Caco-2 (cell line): ENCODE measurements at regions of chr13 and their contacts with region 1.

Region 1: DNA sequence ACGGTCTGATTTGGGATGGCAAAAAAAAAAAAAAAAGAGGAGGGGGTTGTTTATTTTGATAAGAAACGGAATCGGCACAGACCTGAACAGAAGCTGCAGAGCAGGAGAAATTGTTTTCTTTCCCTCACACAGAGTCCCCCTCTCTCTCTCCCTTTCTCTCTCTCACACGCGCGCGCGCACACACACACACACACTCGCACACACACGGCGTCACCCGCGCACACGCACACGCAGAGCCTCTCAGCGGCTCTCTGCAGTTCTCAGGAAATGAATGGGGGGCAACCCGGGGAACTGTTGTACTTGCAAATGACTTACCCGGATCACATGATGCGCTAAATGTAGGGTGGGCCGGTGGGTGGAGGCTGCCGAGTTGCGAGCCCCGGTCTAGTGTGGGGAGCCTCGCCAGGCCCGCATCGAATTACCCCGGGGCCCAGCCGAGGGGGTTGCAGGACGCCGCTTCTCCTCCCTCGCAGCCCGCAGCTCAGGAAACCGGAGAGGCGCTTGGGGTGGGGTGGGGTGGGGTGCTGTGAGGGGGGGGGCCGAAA is 475 bp downstream of the KLF12 start:
- DNase-seq: peak; percentile 71 to 74
- H3K4me3 ChIP-seq: peak overlapping the region; percentile 94
- H3K4me3 Mint-ChIP-seq: no peak overlapping the region
- H3K27ac Mint-ChIP-seq: peak overlapping the region; percentile 67
- H3K4me1 ChIP-seq: peaks cover under 1% of the 10 kb centered on the region
- H3K4me1 Mint-ChIP-seq: peaks cover 8% of the 10 kb centered on the region
- H3K27me3 ChIP-seq: no peaks in the 10 kb centered on the region
- H3K27me3 Mint-ChIP-seq: no peaks in the 10 kb centered on the region
- CTCF ChIP-seq: no peak

Region 2: DNA sequence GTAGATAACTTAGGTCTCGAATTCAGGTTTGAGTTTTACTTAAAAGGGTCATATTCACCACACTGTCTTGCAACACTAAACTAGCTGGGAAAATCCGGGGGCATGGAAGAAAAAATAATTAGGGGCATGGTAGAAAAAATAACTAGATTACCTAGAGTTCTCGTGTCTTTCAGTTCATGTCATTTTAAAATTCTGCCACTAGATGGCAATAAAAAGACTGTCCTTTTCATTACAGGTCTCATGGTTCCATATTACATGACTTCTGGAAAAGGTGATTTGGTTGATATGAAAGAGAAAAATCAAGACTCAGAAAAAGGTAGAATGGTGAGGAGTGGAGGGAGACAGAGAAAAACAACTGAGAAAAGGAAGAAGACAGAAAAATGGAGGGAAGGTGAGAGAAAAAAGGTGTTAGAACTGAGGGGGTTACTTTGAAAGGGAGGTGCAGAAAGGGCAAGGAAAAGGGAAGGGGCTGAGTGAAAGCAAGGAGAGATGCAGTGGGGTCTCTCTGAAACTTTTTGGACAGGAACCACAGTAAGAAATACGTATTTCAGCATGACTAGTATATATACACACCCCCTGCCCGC is 298.5 kb before region 1 on chr13:
- CTCF ChIA-PET with region 1: no interaction called
- POLR2A ChIA-PET with region 1: no interaction called
- intact Hi-C with region 1: loop called (anchors 1 kb)
- DNase-seq: peak in 1 of 2 experiments; percentile 37
- H3K4me3 ChIP-seq: no peak overlapping the region
- H3K4me3 Mint-ChIP-seq: no peak overlapping the region
- H3K27ac Mint-ChIP-seq: no peak overlapping the region
- H3K4me1 ChIP-seq: peaks cover 10% of the 10 kb centered on the region; the same call in 1 of the 2 replicates
- H3K4me1 Mint-ChIP-seq: peaks cover 7% of the 10 kb centered on the region
- H3K27me3 ChIP-seq: no peaks in the 10 kb centered on the region
- H3K27me3 Mint-ChIP-seq: no peaks in the 10 kb centered on the region
- CTCF ChIP-seq: peak in 1 of 2 experiments; percentile 42

Region 3: GRCh38 chr13:73943137-73943964 is 190.4 kb before region 1 on chr13:
- CTCF ChIA-PET with region 1: no interaction called
- POLR2A ChIA-PET with region 1: no interaction called
- intact Hi-C with region 1: loop called (anchors 10 kb)
- DNase-seq: no peak
- H3K4me3 ChIP-seq: no peak overlapping the region
- H3K4me3 Mint-ChIP-seq: no peak overlapping the region
- H3K27ac Mint-ChIP-seq: no peak overlapping the region
- H3K4me1 ChIP-seq: no peaks in the 10 kb centered on the region; the same call in 1 of the 2 replicates
- H3K4me1 Mint-ChIP-seq: peaks cover 9% of the 10 kb centered on the region
- H3K27me3 ChIP-seq: no peaks in the 10 kb centered on the region
- H3K27me3 Mint-ChIP-seq: no peaks in the 10 kb centered on the region
- CTCF ChIP-seq: no peak

Region 4: GRCh38 chr13:74026753-74027152 is 107.0 kb before region 1 on chr13:
- CTCF ChIA-PET with region 1: interaction called, 4 read pairs
- POLR2A ChIA-PET with region 1: interaction called, 3 read pairs
- intact Hi-C with region 1: loop called (anchors 1 kb)
- DNase-seq: no peak
- H3K4me3 ChIP-seq: no peak overlapping the region
- H3K4me3 Mint-ChIP-seq: no peak overlapping the region
- H3K27ac Mint-ChIP-seq: peak overlapping the region; percentile 75
- H3K4me1 ChIP-seq: peaks cover 80% of the 10 kb centered on the region
- H3K4me1 Mint-ChIP-seq: peaks cover 72% of the 10 kb centered on the region
- H3K27me3 ChIP-seq: no peaks in the 10 kb centered on the region
- H3K27me3 Mint-ChIP-seq: no peaks in the 10 kb centered on the region
- CTCF ChIP-seq: no peak

Region 5: DNA sequence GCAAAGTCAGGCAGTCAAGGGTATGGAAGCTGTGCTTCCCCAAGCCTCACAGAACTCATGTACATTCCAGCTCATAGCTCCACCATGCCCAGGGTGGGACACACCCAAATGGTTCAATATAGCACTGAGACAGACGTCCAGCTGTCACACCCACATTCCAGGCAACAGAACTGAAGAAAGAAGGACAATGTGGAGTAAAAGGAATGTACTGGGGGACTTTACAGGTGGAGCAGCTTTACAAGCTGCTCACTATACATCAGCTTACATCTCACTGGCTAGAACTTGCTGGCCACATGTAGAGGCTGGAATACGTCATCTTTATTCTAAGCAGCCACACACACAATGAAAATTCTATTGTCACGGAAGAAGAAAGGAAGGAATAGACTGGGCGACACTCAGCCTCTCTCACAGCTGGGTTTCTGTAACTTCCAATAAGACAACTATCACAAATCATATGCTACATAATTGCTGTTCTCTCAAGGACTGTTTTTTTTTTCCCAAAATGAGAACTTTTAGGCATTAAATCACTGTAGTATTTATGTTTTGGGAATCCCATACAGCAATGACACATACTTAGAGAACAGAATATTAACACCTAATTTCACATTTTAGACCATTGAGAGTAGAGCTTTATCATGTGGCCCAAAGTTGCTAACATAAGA is 85.7 kb before region 1 on chr13:
- CTCF ChIA-PET with region 1: no interaction called
- POLR2A ChIA-PET with region 1: interaction called, 4 read pairs
- intact Hi-C with region 1: loop called (anchors 2 kb)
- DNase-seq: peak; percentile 74 to 83
- H3K4me3 ChIP-seq: no peak overlapping the region
- H3K4me3 Mint-ChIP-seq: peak overlapping the region; percentile 54
- H3K27ac Mint-ChIP-seq: peak overlapping the region; percentile 88
- H3K4me1 ChIP-seq: peaks cover 16% of the 10 kb centered on the region
- H3K4me1 Mint-ChIP-seq: peaks cover 28% of the 10 kb centered on the region
- H3K27me3 ChIP-seq: no peaks in the 10 kb centered on the region
- H3K27me3 Mint-ChIP-seq: no peaks in the 10 kb centered on the region
- CTCF ChIP-seq: no peak

Region 6: GRCh38 chr13:74080762-74081161 is 53.0 kb before region 1 on chr13:
- CTCF ChIA-PET with region 1: no interaction called
- POLR2A ChIA-PET with region 1: no interaction called
- intact Hi-C with region 1: loop called (anchors 2 kb)
- DNase-seq: no peak
- H3K4me3 ChIP-seq: no peak overlapping the region
- H3K4me3 Mint-ChIP-seq: no peak overlapping the region
- H3K27ac Mint-ChIP-seq: no peak overlapping the region
- H3K4me1 ChIP-seq: peaks cover 26% of the 10 kb centered on the region
- H3K4me1 Mint-ChIP-seq: peaks cover 23% of the 10 kb centered on the region
- H3K27me3 ChIP-seq: no peaks in the 10 kb centered on the region
- H3K27me3 Mint-ChIP-seq: no peaks in the 10 kb centered on the region
- CTCF ChIP-seq: no peak